ENCODE measurements at regions of chrX and their contacts with region 1.

Region 1: GRCh38 chrX:11533211-11533651 is 132.5 kb downstream of the ARHGAP6 start:
- DNase-seq: peak; percentile 67
- H3K4me3 ChIP-seq: no peak overlapping the region
- H3K27ac ChIP-seq: no peak overlapping the region
- H3K4me1 ChIP-seq: no peaks in the 10 kb centered on the region
- H3K27me3 ChIP-seq: peaks cover 0 to 3% of the 10 kb centered on the region in 2 experiments
- CTCF ChIP-seq: peak; percentile 30 to 43
- POLR2A ChIP-seq: no peak

Region 2: GRCh38 chrX:11381464-11381863 is 151.8 kb before region 1 on chrX:
- CTCF ChIA-PET with region 1: interaction called, 21 read pairs
- POLR2A ChIA-PET with region 1: no interaction called
- dilution Hi-C with region 1: no loop called
- intact Hi-C with region 1: loop called (anchors 1 kb)
- DNase-seq: peak; percentile 74
- H3K4me3 ChIP-seq: no peak overlapping the region
- H3K27ac ChIP-seq: no peak overlapping the region
- H3K4me1 ChIP-seq: peaks cover 3% of the 10 kb centered on the region
- H3K27me3 ChIP-seq: no peaks in the 10 kb centered on the region
- CTCF ChIP-seq: peak; percentile 35 to 46
- POLR2A ChIP-seq: no peak

Region 3: GRCh38 chrX:11458170-11458569 is 75.1 kb before region 1 on chrX:
- CTCF ChIA-PET with region 1: no interaction called
- POLR2A ChIA-PET with region 1: no interaction called
- dilution Hi-C with region 1: no loop called
- intact Hi-C with region 1: no loop called
- DNase-seq: no peak
- H3K4me3 ChIP-seq: no peak overlapping the region
- H3K27ac ChIP-seq: no peak overlapping the region
- H3K4me1 ChIP-seq: no peaks in the 10 kb centered on the region
- H3K27me3 ChIP-seq: no peaks in the 10 kb centered on the region
- CTCF ChIP-seq: no peak
- POLR2A ChIP-seq: no peak

Region 4: DNA sequence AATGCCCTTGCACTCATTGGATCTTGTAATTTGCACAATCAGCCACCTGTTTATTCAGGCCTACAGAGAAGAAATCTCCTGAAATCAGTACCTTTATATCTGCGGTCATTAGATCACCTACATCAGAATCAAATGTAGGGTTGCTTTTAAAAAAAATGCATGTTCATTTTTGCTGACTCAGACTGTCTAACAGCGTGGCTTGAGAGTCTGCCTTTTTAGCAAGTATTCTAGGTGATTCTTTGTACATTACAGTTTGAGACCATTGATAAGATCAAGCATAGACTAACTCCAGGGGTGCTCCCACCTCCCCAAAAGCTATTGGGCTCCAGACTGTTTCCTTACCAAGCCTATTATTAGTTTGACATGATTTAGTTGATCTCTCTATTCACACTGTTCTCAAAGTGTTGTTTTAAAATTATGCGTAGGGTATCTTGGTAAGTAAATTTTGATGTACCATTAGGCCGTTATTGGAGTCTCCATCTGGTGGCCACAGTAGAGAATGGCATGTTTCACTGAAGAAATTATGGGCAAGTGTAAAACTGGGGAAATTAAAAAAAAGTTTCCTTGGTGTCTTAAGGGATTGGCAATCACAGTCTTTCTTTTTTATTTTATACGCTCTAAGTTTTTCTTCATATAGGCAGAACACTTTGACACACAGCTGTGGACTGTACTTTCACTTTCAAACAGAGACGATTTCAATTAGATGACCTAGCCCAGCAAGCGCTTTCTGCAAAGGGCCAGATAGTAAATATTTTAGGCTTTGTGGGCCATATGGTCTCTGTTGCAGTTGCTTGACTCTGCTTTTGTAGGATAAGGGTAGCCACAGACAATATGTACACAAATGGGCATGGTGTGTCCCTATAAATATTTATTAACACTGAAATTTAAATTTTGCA is 191.1 kb after region 1 on chrX:
- CTCF ChIA-PET with region 1: no interaction called
- POLR2A ChIA-PET with region 1: no interaction called
- dilution Hi-C with region 1: no loop called
- intact Hi-C with region 1: loop called (anchors 1 kb)
- DNase-seq: peak; percentile 29
- H3K4me3 ChIP-seq: no peak overlapping the region
- H3K27ac ChIP-seq: no peak overlapping the region
- H3K4me1 ChIP-seq: no peaks in the 10 kb centered on the region
- H3K27me3 ChIP-seq: no peaks in the 10 kb centered on the region
- CTCF ChIP-seq: peak in 1 of 2 donors; percentile 48
- POLR2A ChIP-seq: no peak

Region 5: GRCh38 chrX:11758400-11759171 is 225.4 kb after region 1 on chrX:
- CTCF ChIA-PET with region 1: interaction called, 4 read pairs
- POLR2A ChIA-PET with region 1: no interaction called
- dilution Hi-C with region 1: no loop called
- intact Hi-C with region 1: loop called (anchors 5 kb)
- DNase-seq: peak; percentile 78
- H3K4me3 ChIP-seq: peak overlapping the region; percentile 34 to 90 (median 90)
- H3K27ac ChIP-seq: peak overlapping the region; percentile 79
- H3K4me1 ChIP-seq: peaks cover 10% of the 10 kb centered on the region
- H3K27me3 ChIP-seq: peaks cover 0 to 4% of the 10 kb centered on the region in 2 experiments
- CTCF ChIP-seq: peak; percentile 34 to 73
- POLR2A ChIP-seq: no peak

Region 6: GRCh38 chrX:11770320-11770719 is 237.1 kb after region 1 on chrX:
- CTCF ChIA-PET with region 1: interaction called, 3 read pairs
- POLR2A ChIA-PET with region 1: no interaction called
- dilution Hi-C with region 1: no loop called
- intact Hi-C with region 1: loop called (anchors 1 kb)
- DNase-seq: peak; percentile 51
- H3K4me3 ChIP-seq: no peak overlapping the region
- H3K27ac ChIP-seq: no peak overlapping the region
- H3K4me1 ChIP-seq: no peaks in the 10 kb centered on the region
- H3K27me3 ChIP-seq: no peaks in the 10 kb centered on the region
- CTCF ChIP-seq: peak; percentile 70 to 72
- POLR2A ChIP-seq: no peak

Region 7: DNA sequence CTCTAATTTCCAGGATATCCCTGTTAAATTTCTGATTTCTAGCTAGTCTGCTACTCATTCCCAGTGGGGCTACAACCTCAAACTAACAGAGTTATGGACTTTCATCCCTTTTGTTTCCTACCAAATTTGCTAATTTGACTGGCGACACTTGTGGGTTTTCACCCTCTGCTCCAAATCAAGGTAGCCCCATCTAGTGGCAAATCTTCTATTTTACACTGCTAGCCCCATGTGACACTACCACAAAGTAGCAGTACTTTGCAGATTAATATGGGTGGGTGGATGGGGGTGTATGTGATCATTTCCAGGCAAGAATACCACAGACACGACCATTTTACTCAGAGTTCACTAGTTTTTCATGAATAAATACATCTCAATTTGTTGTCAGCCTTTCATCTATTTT is 375.1 kb after region 1 on chrX:
- CTCF ChIA-PET with region 1: no interaction called
- POLR2A ChIA-PET with region 1: no interaction called
- dilution Hi-C with region 1: no loop called
- intact Hi-C with region 1: loop called (anchors 5 kb)
- DNase-seq: peak; percentile 32
- H3K4me3 ChIP-seq: no peak overlapping the region
- H3K27ac ChIP-seq: no peak overlapping the region
- H3K4me1 ChIP-seq: no peaks in the 10 kb centered on the region
- H3K27me3 ChIP-seq: no peaks in the 10 kb centered on the region
- CTCF ChIP-seq: peak; percentile 18 to 30
- POLR2A ChIP-seq: no peak

Measured in endothelial cell of umbilical vein (primary cell).